HEK293 (cell line): ENCODE measurements at regions of chr5 and their contacts with region 1.

Region 1: DNA sequence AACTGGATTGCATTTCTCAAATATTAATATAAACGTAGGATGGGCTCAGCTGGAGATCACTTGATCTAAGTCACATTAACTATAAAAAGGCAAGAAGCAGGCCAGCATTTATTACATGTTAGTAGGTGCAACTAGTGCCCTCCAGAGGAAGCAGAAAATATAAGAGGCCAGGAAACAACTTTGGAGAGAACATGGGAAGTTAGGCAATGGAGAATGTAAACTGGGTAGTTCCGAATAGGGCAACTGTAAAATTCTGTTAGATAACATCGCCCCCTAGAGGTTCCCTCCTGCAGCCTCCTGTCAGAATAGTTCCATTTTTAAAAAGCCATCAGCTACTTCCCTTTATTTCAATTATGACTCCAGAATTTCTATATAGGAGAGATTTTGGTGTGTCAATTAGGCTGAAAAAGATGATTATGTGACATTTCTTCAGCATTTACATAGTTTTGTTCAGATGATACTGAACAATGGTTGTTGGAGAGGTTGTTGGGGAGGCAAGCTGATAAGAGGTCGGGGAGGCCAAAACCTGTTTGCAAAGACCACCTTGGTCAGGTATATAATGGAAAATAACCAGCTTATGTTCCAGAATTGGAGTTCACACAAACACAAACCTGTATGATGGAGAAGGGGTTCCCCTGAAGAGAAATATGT is 22.4 kb downstream of the CCL28 start:
- H3K4me3 ChIP-seq: no peak overlapping the region
- H3K27ac ChIP-seq: no peak overlapping the region
- H3K4me1 ChIP-seq: no peaks in the 10 kb centered on the region
- CTCF ChIP-seq: peak; percentile 86

Region 2: GRCh38 chr5:42908509-42909488 is 481.0 kb before region 1 on chr5:
- CTCF ChIA-PET with region 1: interaction called, 38 read pairs
- POLR2A ChIA-PET with region 1: no interaction called
- H3K4me3 ChIP-seq: peak overlapping the region; percentile 40
- H3K27ac ChIP-seq: no peak overlapping the region
- H3K4me1 ChIP-seq: no peaks in the 10 kb centered on the region
- CTCF ChIP-seq: peak; percentile 87

Region 3: DNA sequence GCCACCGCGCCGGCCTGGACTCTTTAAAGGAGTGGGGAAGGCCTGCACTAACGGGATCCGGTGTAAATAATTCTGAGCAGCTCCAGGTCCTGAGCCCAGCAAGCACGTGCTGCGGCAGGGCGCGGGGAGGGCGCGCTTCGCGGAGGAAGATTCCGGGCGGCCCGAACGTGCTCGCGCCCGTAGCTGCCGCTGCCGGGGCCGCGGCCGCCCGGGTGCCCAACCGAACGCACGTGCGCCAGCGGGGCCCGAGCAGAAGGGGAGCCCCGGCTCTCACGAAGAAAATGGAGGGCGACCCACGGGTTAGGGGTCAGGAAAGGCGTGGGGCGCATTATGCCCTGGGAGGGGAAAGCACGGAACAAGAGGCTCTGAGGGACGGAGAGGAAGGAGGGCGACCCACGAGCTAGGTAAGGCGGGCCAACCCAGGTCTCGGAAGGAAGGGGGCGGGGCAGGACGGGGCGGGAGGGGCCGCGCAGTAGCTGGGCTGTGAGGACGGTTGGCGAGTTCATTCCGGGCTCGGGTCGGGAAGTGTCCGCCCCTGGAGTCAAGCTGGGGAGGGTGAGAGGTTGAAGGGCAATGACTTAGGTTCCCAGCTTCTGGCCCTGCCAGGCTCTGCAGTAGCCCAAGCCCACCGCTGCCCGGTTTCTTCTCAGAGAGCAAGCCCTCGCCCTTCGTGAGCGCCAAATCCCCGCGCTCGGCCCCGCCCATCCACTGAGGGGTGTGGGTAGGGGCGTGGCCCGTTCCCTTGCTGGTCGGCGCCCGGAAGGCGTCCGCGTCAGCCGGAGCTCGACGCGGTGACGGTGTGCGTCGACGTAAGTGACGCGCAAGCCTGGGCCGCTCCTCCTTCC is 268.9 kb before region 1 on chr5 and contains the start of gene ZNF131:
- CTCF ChIA-PET with region 1: interaction called, 10 read pairs
- POLR2A ChIA-PET with region 1: no interaction called
- H3K4me3 ChIP-seq: peak within 1 kb of the TSS; percentile 86
- H3K27ac ChIP-seq: peak within 1 kb of the TSS; percentile 92
- H3K4me1 ChIP-seq: peaks cover 11% of the 10 kb centered on the region; the same call in 1 of the 2 replicates
- CTCF ChIP-seq: no peak; the same call in 1 of the 2 replicates

Region 4: DNA sequence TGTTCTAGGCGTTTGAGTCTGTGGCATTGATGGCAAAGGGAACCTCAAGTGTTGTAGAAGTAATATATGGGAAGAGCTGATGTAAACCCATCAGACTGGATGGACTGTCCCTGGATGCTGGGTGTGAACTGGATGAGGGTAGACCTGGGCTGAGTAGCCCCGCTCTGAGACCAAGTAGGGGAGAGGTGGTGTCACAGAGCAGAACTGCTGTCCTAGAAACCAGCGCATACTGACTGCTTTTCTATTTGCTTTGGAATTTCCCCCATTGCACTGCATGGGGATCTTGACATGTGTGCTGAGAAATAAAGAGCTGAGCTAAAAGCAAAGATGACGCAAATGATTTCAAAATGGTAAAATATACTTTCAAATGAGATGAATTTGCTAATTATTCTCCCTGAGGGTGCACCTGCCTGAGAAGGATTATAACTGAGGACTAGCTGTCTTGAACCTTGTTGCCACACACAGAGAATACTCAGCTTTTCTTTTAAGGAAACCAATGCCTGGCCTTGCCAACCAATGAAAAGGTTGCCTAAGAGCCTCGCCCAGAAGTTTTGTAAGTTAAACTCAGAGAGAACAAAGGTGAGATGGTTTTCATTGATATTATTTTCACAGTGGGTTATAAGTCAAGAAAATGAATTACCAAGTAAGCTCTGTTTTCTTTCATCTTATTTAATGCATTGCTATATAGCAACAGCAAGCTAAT is 153.0 kb before region 1 on chr5:
- CTCF ChIA-PET with region 1: interaction called, 25 read pairs
- POLR2A ChIA-PET with region 1: no interaction called
- H3K4me3 ChIP-seq: no peak overlapping the region
- H3K27ac ChIP-seq: no peak overlapping the region
- H3K4me1 ChIP-seq: no peaks in the 10 kb centered on the region
- CTCF ChIP-seq: no peak

Region 5: GRCh38 chr5:43313035-43313853 is 76.6 kb before region 1 on chr5 and contains the start of gene HMGCS1:
- CTCF ChIA-PET with region 1: interaction called, 8 read pairs
- POLR2A ChIA-PET with region 1: interaction called, 11 read pairs
- H3K4me3 ChIP-seq: peak within 1 kb of the TSS; percentile 90
- H3K27ac ChIP-seq: peak within 1 kb of the TSS; percentile 83
- H3K4me1 ChIP-seq: peaks cover 19% of the 10 kb centered on the region
- CTCF ChIP-seq: peak; percentile 97

Region 6: GRCh38 chr5:43409809-43410271 is 20.0 kb after region 1 on chr5:
- CTCF ChIA-PET with region 1: interaction called, 21 read pairs
- POLR2A ChIA-PET with region 1: no interaction called
- H3K4me3 ChIP-seq: no peak overlapping the region
- H3K27ac ChIP-seq: peak overlapping the region; percentile 19; the same call in 1 of the 2 replicates
- H3K4me1 ChIP-seq: peaks cover 11% of the 10 kb centered on the region
- CTCF ChIP-seq: no peak